T-cell (primary cell): ENCODE measurements at regions of chr2 and their contacts with region 1.

Region 1: DNA sequence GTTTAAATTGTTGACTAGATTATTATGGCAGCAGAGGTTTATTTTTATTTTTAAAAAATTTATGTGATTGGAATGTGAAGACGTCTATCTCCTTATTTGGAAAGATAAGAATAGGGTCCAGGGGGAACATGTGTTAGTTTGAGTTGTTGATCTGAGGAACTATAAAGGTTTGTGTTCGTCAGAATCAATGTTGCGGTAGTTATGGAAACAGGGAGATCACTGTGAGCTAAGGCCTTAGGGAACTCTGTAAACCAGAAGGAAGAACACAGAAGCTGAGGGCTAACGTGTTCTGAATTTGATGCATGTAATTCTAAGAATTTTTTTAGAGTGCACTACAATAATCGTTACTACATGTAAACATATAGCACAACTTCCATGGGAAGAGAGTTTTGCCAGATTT is 168.5 kb upstream of the ZSWIM2 start:
- DNase-seq: no peak
- ATAC-seq: no peak
- H3K4me3 ChIP-seq: no peak overlapping the region
- H3K4me3 Mint-ChIP-seq: no peak overlapping the region
- H3K27ac ChIP-seq: no peak overlapping the region
- H3K27ac Mint-ChIP-seq: no peak overlapping the region
- H3K4me1 ChIP-seq: no peaks in the 10 kb centered on the region
- H3K4me1 Mint-ChIP-seq: no peaks in the 10 kb centered on the region
- H3K27me3 ChIP-seq: no peaks in the 10 kb centered on the region
- H3K27me3 Mint-ChIP-seq: no peaks in the 10 kb centered on the region

Region 2: GRCh38 chr2:186783254-186783653 is 234.2 kb before region 1 on chr2:
- CTCF ChIA-PET with region 1: no interaction called
- POLR2A ChIA-PET with region 1: interaction called in 1 of 2 experiments, 12 read pairs
- DNase-seq: no peak
- ATAC-seq: no peak
- H3K4me3 ChIP-seq: no peak overlapping the region
- H3K4me3 Mint-ChIP-seq: no peak overlapping the region
- H3K27ac ChIP-seq: no peak overlapping the region
- H3K27ac Mint-ChIP-seq: no peak overlapping the region
- H3K4me1 ChIP-seq: no peaks in the 10 kb centered on the region
- H3K4me1 Mint-ChIP-seq: no peaks in the 10 kb centered on the region
- H3K27me3 ChIP-seq: peaks cover 0 to 4% of the 10 kb centered on the region in 2 experiments
- H3K27me3 Mint-ChIP-seq: no peaks in the 10 kb centered on the region

Region 3: GRCh38 chr2:186995092-186995491 is 22.3 kb before region 1 on chr2:
- CTCF ChIA-PET with region 1: no interaction called
- POLR2A ChIA-PET with region 1: no interaction called
- DNase-seq: no peak
- ATAC-seq: no peak
- H3K4me3 ChIP-seq: no peak overlapping the region
- H3K4me3 Mint-ChIP-seq: no peak overlapping the region
- H3K27ac ChIP-seq: no peak overlapping the region
- H3K27ac Mint-ChIP-seq: no peak overlapping the region
- H3K4me1 ChIP-seq: no peaks in the 10 kb centered on the region
- H3K4me1 Mint-ChIP-seq: no peaks in the 10 kb centered on the region
- H3K27me3 ChIP-seq: no peaks in the 10 kb centered on the region
- H3K27me3 Mint-ChIP-seq: no peaks in the 10 kb centered on the region